Activated naive CD8-positive, alpha-beta T cell treated with anti-CD3 and anti-CD28 coated beads, Interleukin-2, amount 10 ng/mL, durations not matched to agents 7 days and 5 days (primary cell): ENCODE measurements at regions of chr18 and their contacts with region 1.

Region 1: DNA sequence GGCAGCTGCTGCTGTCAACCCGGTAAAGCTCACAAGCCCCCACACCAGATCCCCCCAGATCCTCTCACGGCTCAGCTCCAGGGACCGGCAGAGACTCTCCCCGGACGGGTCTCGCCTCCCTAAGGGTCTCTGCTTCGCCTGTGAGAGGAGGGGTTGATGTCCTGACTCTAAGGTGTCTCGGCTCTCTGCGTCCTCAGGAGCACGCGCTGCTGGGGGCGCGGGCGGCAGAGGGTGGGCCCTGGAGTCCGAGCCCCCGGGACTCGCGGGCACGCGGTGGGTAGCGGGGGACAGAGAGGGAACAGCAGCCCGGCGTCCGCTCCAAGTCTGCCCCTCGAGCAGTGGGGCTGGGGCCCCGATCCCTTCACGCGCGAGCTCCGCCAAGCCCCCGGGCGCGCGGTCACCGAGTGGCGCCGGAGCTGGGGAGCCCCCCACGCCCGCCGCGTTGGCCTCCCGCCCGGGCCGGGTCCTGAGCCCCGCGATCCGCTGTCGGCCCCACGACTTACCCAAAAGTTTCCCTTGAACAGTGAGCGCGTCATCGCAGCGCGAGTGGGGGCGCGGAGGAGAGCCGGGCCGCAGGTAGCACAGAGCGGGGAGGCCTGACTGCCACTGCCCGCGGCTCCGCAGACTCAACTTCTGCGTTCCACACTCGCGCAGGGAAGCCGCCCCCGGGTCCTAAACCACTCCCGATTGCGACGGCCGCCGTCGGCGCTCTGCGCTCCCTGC is at the start of gene PSTPIP2:
- DNase-seq: peak; percentile 76
- ATAC-seq: peak; percentile 83
- H3K4me3 Mint-ChIP-seq: peak within 1 kb of the TSS; percentile 83
- H3K27ac Mint-ChIP-seq: peak within 1 kb of the TSS; percentile 85
- H3K4me1 Mint-ChIP-seq: peaks cover 29% of the 10 kb centered on the region
- H3K27me3 Mint-ChIP-seq: no peaks in the 10 kb centered on the region
- total RNA-seq, gene PSTPIP2: 12.6 to 12.9 TPM

Region 2: DNA sequence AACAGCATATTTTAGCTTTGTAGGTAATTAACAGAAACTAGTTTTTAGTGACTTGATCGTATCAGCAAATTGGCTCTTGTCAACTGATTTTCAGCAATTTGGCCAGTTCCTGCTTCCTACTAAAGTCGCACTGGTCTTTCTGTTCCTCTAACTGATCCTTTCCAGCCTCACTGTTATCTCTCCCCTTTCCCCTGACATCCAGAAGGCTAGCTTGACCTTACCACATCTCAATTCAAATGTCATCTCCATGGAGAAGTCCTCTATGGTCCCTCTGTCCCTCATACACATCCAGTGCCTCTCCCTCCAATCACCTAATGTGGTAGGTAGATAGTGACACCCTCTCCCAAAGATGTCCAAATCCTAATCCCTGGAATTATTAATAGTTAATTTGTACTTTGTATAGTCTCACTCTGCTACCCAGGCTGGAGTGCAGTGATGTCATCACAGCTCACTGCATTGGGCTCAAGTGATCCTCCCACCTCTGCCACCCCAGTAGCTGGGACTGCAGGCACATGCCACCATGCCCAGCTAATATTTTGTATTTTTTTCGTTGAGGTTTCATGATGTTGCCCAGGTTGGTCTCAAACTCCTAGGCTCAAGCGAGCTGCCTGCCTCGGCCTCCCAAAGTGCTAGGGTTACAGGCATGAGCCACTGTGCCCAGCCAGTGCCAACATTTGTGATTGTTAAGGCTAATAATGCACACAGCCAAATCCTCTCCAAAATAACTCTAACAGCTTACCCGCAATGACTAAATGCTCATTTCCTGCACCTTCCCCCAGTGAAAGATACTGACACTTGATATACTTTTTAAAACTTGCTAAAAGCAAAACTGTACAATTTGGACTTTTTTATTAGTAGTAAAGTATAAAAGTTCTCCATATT is 16.6 kb before region 1 on chr18:
- POLR2A ChIA-PET with region 1: interaction called, 10 read pairs
- DNase-seq: no peak
- ATAC-seq: peak; percentile 80
- H3K4me3 Mint-ChIP-seq: peak overlapping the region; percentile 61
- H3K27ac Mint-ChIP-seq: peak overlapping the region; percentile 84
- H3K4me1 Mint-ChIP-seq: peaks cover 18% of the 10 kb centered on the region
- H3K27me3 Mint-ChIP-seq: no peaks in the 10 kb centered on the region